ENCODE measurements at regions of chr16 and their contacts with region 1.

Region 1: GRCh38 chr16:67428146-67428731 is 2.7 kb upstream of the HSD11B2 start:
- DNase-seq: peak; percentile 76
- ATAC-seq: peak; percentile 77
- H3K4me3 Mint-ChIP-seq: no peak overlapping the region
- H3K27ac Mint-ChIP-seq: no peak overlapping the region
- H3K4me1 Mint-ChIP-seq: peaks cover 7% of the 10 kb centered on the region
- H3K27me3 Mint-ChIP-seq: peaks cover 40% of the 10 kb centered on the region
- CTCF ChIP-seq: peak; percentile 84

Region 2: DNA sequence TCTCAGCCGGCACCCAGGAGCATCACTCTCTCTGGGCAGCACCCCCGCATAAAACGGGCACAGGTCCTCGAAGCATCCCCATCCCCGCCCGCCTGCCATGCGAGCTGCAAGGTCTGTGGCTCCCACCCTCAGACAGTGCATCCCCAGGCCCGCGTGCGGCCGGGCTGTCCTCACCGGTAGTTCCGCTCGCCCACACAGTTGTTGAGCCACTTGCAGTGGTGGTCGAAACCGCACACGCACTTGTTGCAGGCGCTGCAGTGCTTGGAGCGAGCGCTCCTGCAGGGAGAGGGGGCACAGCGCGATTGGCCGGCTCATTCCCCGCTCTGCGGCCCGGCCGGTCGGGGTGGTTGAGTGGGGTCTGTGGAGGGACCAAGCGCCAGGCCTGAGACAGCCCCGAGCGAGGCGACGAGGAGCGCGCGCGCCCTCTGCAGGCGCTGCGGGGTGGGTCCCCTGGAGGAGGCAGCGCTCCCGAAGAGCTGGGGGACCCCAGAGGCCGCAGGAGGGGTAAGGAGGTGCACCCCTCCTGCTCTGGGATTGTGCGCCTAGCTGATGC is 29.0 kb before region 1 on chr16:
- CTCF ChIA-PET with region 1: interaction called, 17 read pairs
- POLR2A ChIA-PET with region 1: no interaction called
- intact Hi-C with region 1: no loop called
- DNase-seq: peak; percentile 65
- ATAC-seq: peak; percentile 91
- H3K4me3 Mint-ChIP-seq: no peak overlapping the region
- H3K27ac Mint-ChIP-seq: no peak overlapping the region
- H3K4me1 Mint-ChIP-seq: peaks cover under 1% of the 10 kb centered on the region
- H3K27me3 Mint-ChIP-seq: peaks cover 16% of the 10 kb centered on the region
- CTCF ChIP-seq: peak; percentile 94

Region 3: DNA sequence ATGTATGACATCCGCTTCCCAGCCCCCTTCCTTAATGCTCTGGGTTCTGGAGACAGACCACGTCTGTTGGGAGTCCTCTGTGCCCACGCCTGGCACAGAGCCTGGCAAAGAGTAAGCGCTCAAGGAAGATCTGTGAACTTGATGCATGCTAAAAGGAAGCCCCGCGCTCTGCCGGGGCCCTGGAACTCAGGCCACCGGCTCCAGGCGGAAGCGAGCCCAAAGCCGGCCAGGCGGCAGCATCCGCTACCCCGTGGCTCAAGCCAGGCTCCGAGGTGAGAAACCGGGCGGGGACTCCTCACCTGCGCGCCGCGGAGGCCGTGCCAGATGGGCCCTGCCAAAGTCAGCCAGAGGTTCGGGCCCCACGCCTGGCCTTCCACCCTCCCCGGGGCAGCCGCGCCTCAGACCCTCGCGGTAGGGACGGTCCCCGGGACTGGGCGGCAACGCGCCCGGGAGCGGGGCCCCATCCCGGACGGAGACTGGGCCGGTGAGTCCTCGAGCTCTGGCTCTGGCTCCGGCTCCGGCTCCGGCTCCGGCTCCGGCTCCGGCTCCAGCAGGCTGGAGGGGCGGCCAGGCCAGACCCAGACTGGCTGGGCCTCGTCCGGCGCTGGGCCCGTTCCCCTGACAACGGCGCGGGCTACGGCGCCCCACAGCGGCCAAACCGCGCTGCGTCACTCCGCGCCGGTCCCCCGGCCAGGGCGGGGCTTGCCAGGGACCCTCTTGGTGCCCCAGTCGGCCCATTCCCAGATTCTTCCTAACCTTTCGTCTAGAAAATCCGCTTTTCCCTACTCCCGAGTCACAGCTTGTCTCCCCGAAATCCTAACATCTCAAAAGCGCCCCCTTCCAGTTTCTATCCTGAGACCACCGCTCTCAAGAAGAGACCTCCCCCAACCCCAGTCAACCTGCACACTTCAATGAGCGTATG is 12.1 kb before region 1 on chr16 and contains the start of gene ZDHHC1:
- CTCF ChIA-PET with region 1: interaction called, 25 read pairs
- POLR2A ChIA-PET with region 1: interaction called, 3 read pairs
- intact Hi-C with region 1: no loop called
- DNase-seq: peak; percentile 57
- ATAC-seq: peak; percentile 95
- H3K4me3 Mint-ChIP-seq: peak within 1 kb of the TSS; percentile 65
- H3K27ac Mint-ChIP-seq: no peak within 1 kb of the TSS
- H3K4me1 Mint-ChIP-seq: peaks cover 5% of the 10 kb centered on the region
- H3K27me3 Mint-ChIP-seq: peaks cover 26% of the 10 kb centered on the region
- CTCF ChIP-seq: peak; percentile 48
- total RNA-seq, gene ZDHHC1: 0.54 to 0.60 TPM

Region 4: DNA sequence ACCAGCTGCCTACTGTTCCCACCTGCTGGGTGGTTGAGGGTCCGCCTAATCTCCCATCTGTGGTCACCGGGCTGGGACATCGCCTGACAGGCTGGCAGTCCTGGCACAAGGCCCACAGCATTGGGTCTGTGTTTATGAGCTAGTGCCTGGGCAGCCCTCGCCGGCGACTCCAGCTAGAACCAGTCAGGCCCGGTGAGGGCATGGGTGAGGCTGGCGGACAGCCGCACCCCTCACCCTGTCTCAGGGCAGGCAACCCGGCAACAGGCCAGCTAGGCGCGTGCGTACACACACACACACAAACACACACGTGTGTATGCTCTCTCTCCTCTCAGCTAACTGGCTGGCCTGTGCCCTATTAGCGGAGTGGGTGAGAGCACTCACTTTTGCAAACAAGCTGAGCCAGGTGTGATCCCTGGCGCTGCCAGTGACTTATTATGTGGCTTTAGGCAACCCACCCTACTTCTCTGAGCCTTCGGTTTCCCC is 13.1 kb after region 1 on chr16:
- CTCF ChIA-PET with region 1: interaction called, 94 read pairs
- POLR2A ChIA-PET with region 1: interaction called, 8 read pairs
- intact Hi-C with region 1: no loop called
- DNase-seq: no peak
- ATAC-seq: no peak
- H3K4me3 Mint-ChIP-seq: no peak overlapping the region
- H3K27ac Mint-ChIP-seq: no peak overlapping the region
- H3K4me1 Mint-ChIP-seq: peaks cover 5% of the 10 kb centered on the region
- H3K27me3 Mint-ChIP-seq: no peaks in the 10 kb centered on the region
- CTCF ChIP-seq: no peak

Region 5: DNA sequence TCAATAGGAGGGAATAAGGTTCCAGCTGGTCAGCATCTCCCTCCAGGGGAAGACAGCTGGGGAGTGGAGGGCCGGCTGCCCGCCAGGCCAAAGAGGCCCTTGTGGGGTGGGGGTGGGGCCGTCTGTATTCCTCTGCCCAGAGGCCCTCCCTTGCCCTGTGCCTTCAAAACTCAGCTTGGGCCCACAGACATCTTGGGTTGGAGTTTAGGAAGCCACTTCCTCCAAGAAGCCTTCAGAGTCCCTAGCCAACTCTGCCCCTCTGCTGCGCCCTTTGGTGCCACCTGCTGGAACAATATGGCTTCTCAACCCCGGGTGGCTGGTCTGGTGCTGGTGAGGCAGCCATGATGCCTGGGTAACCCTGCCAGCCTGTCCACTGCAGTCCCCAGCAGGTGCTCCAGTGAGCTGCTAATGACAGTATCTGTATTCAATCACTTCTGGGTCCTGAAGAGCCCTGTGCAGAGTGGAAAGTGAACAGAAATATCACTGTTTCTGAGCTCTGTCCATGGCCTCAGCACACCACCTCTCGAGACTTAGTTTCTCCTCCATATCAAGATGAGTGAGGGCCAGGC is 19.4 kb after region 1 on chr16:
- CTCF ChIA-PET with region 1: interaction called, 94 read pairs
- POLR2A ChIA-PET with region 1: interaction called, 3 read pairs
- intact Hi-C with region 1: no loop called
- DNase-seq: peak; percentile 88
- ATAC-seq: peak; percentile 99
- H3K4me3 Mint-ChIP-seq: no peak overlapping the region
- H3K27ac Mint-ChIP-seq: no peak overlapping the region
- H3K4me1 Mint-ChIP-seq: no peaks in the 10 kb centered on the region
- H3K27me3 Mint-ChIP-seq: no peaks in the 10 kb centered on the region
- CTCF ChIP-seq: peak; percentile 66

Region 6: GRCh38 chr16:67464565-67464964 is 36.3 kb after region 1 on chr16:
- CTCF ChIA-PET with region 1: interaction called, 57 read pairs
- POLR2A ChIA-PET with region 1: interaction called, 3 read pairs
- intact Hi-C with region 1: loop called (anchors 5 kb)
- DNase-seq: no peak
- ATAC-seq: no peak
- H3K4me3 Mint-ChIP-seq: no peak overlapping the region
- H3K27ac Mint-ChIP-seq: no peak overlapping the region
- H3K4me1 Mint-ChIP-seq: peaks cover 12% of the 10 kb centered on the region
- H3K27me3 Mint-ChIP-seq: no peaks in the 10 kb centered on the region
- CTCF ChIP-seq: no peak

Region 7: GRCh38 chr16:67470359-67470758 is 42.1 kb after region 1 on chr16:
- CTCF ChIA-PET with region 1: interaction called, 57 read pairs
- POLR2A ChIA-PET with region 1: interaction called, 3 read pairs
- intact Hi-C with region 1: loop called (anchors 5 kb)
- DNase-seq: no peak
- ATAC-seq: no peak
- H3K4me3 Mint-ChIP-seq: no peak overlapping the region
- H3K27ac Mint-ChIP-seq: no peak overlapping the region
- H3K4me1 Mint-ChIP-seq: peaks cover 32% of the 10 kb centered on the region
- H3K27me3 Mint-ChIP-seq: no peaks in the 10 kb centered on the region
- CTCF ChIP-seq: no peak

Region 8: GRCh38 chr16:67504041-67505021 is 76.1 kb after region 1 on chr16:
- CTCF ChIA-PET with region 1: no interaction called
- POLR2A ChIA-PET with region 1: no interaction called
- intact Hi-C with region 1: no loop called
- DNase-seq: peak; percentile 75
- ATAC-seq: peak; percentile 97
- H3K4me3 Mint-ChIP-seq: no peak overlapping the region
- H3K27ac Mint-ChIP-seq: peak overlapping the region; percentile 83
- H3K4me1 Mint-ChIP-seq: peaks cover 40% of the 10 kb centered on the region
- H3K27me3 Mint-ChIP-seq: no peaks in the 10 kb centered on the region
- CTCF ChIP-seq: no peak

Measured in activated CD8-positive, alpha-beta T cell treated with anti-CD3 and anti-CD28 coated beads for 36 hours (primary cell).